Posterior cingulate gyrus (tissue), 11 donors: ENCODE measurements at regions of chr11 and their contacts with region 1.

Region 1: DNA sequence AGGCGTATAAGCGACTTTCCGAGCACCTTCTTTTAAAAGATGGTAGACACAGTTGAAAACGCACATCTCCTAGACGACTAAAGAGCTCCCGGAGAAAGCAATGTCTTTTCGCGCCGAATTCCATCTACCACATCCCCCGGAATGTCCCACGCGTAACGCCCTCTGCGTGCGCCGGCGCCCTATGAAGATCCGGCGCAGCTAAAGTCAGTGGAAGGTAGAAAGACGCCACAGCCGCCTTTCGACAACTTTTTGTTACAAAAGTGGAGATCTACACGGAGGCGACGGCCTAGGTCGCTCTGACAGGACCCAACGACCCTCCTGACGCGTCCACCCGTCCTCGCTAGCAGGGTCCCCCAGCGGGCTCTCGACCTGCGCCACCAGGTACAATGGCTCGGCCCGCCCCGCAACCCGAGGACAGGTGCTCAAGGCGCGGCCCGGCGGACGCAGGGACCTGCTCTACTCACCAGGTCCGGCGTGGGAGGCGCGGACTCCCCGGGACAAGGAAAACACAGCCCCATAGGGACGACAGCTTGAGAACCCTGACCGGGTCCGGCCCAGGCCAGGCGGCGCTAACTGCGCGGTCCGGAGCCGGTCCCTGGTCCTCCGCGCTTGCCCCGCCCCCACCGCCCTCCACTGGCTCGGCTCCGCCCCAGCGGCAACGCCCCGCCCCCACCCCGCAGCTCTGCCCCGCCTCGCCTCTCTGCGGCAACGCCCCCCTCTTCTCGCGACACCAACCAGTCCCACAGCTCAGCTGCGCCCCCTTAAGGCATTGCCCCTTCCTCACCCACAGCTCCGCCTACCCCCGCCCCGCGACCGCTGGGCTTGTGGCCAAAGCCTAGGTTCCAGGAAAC is at the start of gene SVIP:
- DNase-seq: peak; percentile 87 to 99 (median 96)

Region 2: GRCh38 chr11:22244986-22245592 is 584.4 kb before region 1 on chr11:
- intact Hi-C with region 1: loop called (anchors 10 kb)
- DNase-seq: peak in 7 of 10 donors; percentile 4 to 78 (median 24)

Region 3: DNA sequence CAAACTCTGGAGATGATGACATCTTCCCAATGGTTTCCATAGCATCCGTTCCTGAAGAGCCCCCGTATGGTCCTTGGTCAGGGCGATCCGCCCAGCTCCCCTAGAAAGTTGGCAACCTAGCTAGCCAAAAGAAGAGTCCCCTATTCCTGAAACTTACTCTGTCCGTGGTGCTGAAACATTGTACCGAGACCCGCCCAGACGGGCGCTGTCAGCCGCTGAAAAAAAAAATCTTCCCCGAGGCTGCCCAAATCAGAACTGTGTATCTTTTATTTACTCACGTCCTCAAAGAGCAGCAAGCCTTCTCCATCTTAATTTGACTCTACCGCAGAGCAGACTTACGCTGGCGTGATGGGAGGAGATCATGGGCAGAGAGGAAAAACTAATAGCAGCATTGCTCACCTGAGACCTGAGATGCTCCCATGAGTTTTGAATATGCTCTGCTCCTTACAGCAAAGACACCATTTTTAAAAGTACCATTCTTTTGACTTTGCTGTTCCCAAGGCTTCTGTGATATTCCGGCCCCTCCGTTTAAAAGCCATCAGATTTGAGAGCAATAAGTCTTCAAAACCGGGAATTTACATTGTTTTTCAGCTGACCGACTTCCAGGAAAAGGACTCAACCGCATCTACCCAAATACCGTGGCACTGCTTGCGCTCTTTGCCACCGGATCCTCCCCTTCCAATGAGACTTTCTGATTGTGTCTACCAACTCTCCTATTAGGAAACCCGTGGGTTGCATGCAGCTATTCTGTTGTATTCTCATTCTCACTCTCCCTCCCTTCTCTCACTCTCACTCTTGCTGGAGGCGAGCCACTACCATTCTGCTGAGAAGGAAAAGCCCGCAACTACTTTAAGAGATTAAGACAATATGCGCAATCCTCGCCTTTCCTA is 491.6 kb before region 1 on chr11 and contains the start of gene SLC17A6:
- intact Hi-C with region 1: loop called (anchors 10 kb)
- DNase-seq: peak in 1 of 10 donors; percentile 72

Region 4: GRCh38 chr11:22625448-22626287 is 203.8 kb before region 1 on chr11 and contains the start of gene FANCF:
- intact Hi-C with region 1: loop called (anchors 2 kb)
- DNase-seq: peak; percentile 79 to 97 (median 90)

Region 5: GRCh38 chr11:22787551-22788162 is 41.8 kb before region 1 on chr11:
- intact Hi-C with region 1: loop called (anchors 5 kb)
- DNase-seq: peak in 2 of 10 donors; percentile 11 to 38